MCF 10A (cell line): ENCODE measurements at regions of chr17 and their contacts with region 1.

Region 1: GRCh38 chr17:82037113-82037888 is at the start of gene DCXR:
- DNase-seq: peak; percentile 96
- H3K4me3 Mint-ChIP-seq: peak within 1 kb of the TSS; percentile 82
- H3K27ac Mint-ChIP-seq: peak within 1 kb of the TSS; percentile 88
- H3K4me1 Mint-ChIP-seq: peaks cover 8% of the 10 kb centered on the region
- H3K27me3 Mint-ChIP-seq: no peaks in the 10 kb centered on the region
- CTCF ChIP-seq: peak; percentile 71
- total RNA-seq, gene DCXR: 77.9 and 111 TPM in 2 replicates

Region 2: GRCh38 chr17:82051776-82052637 is 14.7 kb after region 1 on chr17 and contains the starts of genes GPS1 and RFNG:
- CTCF ChIA-PET with region 1: interaction called, 7 read pairs
- POLR2A ChIA-PET with region 1: interaction called, 11 read pairs
- intact Hi-C with region 1: no loop called
- DNase-seq: peak; percentile 59
- H3K4me3 Mint-ChIP-seq: peak within 1 kb of the TSS; percentile 75
- H3K27ac Mint-ChIP-seq: no peak within 1 kb of the TSS
- H3K4me1 Mint-ChIP-seq: no peaks in the 10 kb centered on the region
- H3K27me3 Mint-ChIP-seq: no peaks in the 10 kb centered on the region
- CTCF ChIP-seq: no peak
- total RNA-seq, gene GPS1: 96.6 and 100 TPM in 2 replicates
- total RNA-seq, gene RFNG: 37.9 and 38.0 TPM in 2 replicates

Region 3: DNA sequence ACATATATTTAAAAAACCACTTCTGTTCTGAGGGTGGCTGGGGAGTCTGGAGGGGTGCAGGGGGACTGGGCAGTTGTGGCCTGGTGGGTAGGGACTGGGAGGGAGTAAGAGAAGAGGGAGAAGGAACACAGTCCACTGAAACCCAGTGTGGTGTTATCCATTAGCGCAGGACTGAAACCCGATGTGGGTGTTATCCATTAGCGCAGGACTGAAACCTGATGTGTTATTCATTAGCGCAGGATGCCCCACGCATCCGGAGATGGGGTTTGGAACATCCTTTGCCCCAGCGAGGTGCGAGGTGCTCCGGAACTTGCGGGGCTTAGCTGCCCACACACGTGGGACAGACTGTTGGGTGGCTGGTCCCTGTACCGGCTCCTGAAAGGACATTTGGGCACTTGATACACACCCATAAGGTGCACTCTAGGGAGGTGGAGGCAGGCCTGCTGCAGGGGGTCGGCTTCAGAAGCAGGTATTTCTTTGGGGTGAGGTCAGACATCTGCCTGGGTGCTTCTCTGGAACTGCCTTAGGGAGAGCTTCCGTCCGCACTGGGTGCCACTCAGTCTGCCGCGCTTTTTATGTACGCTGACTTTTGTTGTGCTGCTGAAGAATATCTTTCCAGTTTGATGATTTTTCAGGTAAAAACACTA is 81.0 kb after region 1 on chr17:
- CTCF ChIA-PET with region 1: no interaction called
- POLR2A ChIA-PET with region 1: no interaction called
- intact Hi-C with region 1: no loop called
- DNase-seq: no peak
- H3K4me3 Mint-ChIP-seq: no peak overlapping the region
- H3K27ac Mint-ChIP-seq: no peak overlapping the region
- H3K4me1 Mint-ChIP-seq: no peaks in the 10 kb centered on the region
- H3K27me3 Mint-ChIP-seq: no peaks in the 10 kb centered on the region
- CTCF ChIP-seq: no peak